MCF 10A (cell line): ENCODE measurements at regions of chr1 and their contacts with region 1.

Region 1: GRCh38 chr1:208934933-208935332 is 648.6 kb upstream of the CAMK1G start:
- DNase-seq: peak; percentile 27
- H3K4me3 Mint-ChIP-seq: no peak overlapping the region
- H3K27ac Mint-ChIP-seq: peak overlapping the region; percentile 58
- H3K4me1 Mint-ChIP-seq: peaks cover 7% of the 10 kb centered on the region
- H3K27me3 Mint-ChIP-seq: no peaks in the 10 kb centered on the region
- CTCF ChIP-seq: no peak

Region 2: GRCh38 chr1:208977638-208978256 is 42.8 kb after region 1 on chr1:
- CTCF ChIA-PET with region 1: interaction called, 4 read pairs
- POLR2A ChIA-PET with region 1: interaction called, 5 read pairs
- intact Hi-C with region 1: loop called (anchors 2 kb)
- DNase-seq: peak; percentile 82
- H3K4me3 Mint-ChIP-seq: no peak overlapping the region
- H3K27ac Mint-ChIP-seq: peak overlapping the region; percentile 91
- H3K4me1 Mint-ChIP-seq: peaks cover 48% of the 10 kb centered on the region
- H3K27me3 Mint-ChIP-seq: no peaks in the 10 kb centered on the region
- CTCF ChIP-seq: no peak